Activated CD4-positive, alpha-beta memory T cell treated with anti-CD3 and anti-CD28 coated beads, Interleukin-2, amount 10 ng/mL, durations not matched to agents 7 days and 5 days (primary cell): ENCODE measurements at regions of chr12 and their contacts with region 1.

Region 1: GRCh38 chr12:22409377-22410164 is 75.1 kb upstream of the ST8SIA1 start:
- DNase-seq: peak; percentile 69
- H3K4me3 Mint-ChIP-seq: peak overlapping the region; percentile 58
- H3K27ac Mint-ChIP-seq: peak overlapping the region; percentile 91
- H3K4me1 Mint-ChIP-seq: peaks cover 41% of the 10 kb centered on the region
- H3K27me3 Mint-ChIP-seq: no peaks in the 10 kb centered on the region

Region 2: GRCh38 chr12:22262309-22262708 is 147.3 kb before region 1 on chr12:
- CTCF ChIA-PET with region 1: no interaction called
- POLR2A ChIA-PET with region 1: no interaction called
- DNase-seq: no peak
- H3K4me3 Mint-ChIP-seq: no peak overlapping the region
- H3K27ac Mint-ChIP-seq: no peak overlapping the region
- H3K4me1 Mint-ChIP-seq: no peaks in the 10 kb centered on the region
- H3K27me3 Mint-ChIP-seq: no peaks in the 10 kb centered on the region

Region 3: DNA sequence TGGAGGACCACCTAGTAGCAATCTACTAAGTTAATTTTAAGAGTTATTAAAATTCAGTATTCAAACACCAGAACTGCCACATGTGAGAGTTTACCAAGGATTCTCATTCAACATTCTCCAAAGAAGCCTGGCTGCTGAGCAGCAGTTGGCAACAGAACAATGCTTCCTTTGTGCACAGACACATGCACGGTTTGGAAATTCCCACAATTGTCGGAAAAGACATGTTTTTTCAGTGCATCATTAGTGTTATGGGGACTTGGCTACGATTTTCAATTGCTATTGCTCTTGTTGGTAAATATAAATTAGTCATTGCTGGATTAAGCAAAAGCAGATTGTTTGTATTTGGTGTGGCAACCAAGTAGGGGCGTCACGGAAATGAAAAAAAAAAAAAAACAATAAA is 97.2 kb before region 1 on chr12:
- CTCF ChIA-PET with region 1: no interaction called
- POLR2A ChIA-PET with region 1: no interaction called
- DNase-seq: no peak
- H3K4me3 Mint-ChIP-seq: no peak overlapping the region
- H3K27ac Mint-ChIP-seq: no peak overlapping the region
- H3K4me1 Mint-ChIP-seq: no peaks in the 10 kb centered on the region
- H3K27me3 Mint-ChIP-seq: no peaks in the 10 kb centered on the region

Region 4: DNA sequence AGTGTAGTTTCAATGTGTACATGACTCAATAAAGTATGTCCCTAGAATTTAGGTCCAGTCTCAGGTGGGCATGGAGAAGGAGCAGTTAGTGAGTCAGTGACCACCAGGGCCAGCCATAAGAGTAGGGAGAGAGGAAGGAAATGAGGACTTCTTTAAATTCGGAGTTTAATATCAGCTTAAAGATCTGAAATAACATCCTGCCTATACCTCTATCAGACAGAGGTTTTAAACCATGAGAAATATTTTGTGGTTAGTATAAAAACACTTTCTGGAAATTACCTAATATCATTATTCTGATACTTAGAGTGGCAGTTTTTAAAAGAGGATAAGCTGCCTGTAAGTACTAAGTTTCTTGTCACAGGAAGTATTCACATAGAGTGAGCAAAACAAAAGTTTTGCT is 13.3 kb before region 1 on chr12:
- CTCF ChIA-PET with region 1: interaction called, 5 read pairs
- POLR2A ChIA-PET with region 1: interaction called, 17 read pairs
- DNase-seq: no peak
- H3K4me3 Mint-ChIP-seq: no peak overlapping the region
- H3K27ac Mint-ChIP-seq: peak overlapping the region; percentile 67
- H3K4me1 Mint-ChIP-seq: peaks cover 26% of the 10 kb centered on the region
- H3K27me3 Mint-ChIP-seq: no peaks in the 10 kb centered on the region